Posterior vena cava (tissue), 2 donors: ENCODE measurements at regions of chr5 and their contacts with region 1.

Region 1: DNA sequence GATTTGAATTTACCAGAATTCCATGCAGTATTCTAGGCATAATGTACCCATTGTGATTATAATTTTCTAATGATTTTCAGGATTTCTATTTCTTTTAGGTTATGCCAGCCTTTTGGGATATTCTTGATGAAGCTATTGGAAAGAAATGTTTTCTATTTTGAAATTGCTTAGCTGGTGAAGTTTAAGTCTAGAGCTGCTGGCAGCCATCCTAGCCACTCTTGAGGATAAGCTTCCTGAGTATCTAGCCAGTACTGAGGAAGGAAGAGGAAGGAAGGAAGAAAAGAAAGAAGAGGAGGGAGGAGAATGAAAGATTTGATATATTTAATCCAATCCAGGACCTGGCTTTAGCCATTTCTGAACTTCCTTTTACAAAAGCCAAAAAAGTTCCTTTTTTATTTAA is 142.1 kb upstream of the DAB2 start:
- DNase-seq: no peak

Region 2: GRCh38 chr5:39217365-39218281 is 349.3 kb before region 1 on chr5:
- intact Hi-C with region 1: loop called in 1 of 2 experiments (anchors 10 kb)
- DNase-seq: peak; percentile 88

Region 3: GRCh38 chr5:39376293-39376714 is 190.6 kb before region 1 on chr5:
- intact Hi-C with region 1: loop called in 1 of 2 experiments (anchors 5 kb)
- DNase-seq: no peak